HAP-1 (cell line): ENCODE measurements at regions of chr10 and their contacts with region 1.

Region 1: DNA sequence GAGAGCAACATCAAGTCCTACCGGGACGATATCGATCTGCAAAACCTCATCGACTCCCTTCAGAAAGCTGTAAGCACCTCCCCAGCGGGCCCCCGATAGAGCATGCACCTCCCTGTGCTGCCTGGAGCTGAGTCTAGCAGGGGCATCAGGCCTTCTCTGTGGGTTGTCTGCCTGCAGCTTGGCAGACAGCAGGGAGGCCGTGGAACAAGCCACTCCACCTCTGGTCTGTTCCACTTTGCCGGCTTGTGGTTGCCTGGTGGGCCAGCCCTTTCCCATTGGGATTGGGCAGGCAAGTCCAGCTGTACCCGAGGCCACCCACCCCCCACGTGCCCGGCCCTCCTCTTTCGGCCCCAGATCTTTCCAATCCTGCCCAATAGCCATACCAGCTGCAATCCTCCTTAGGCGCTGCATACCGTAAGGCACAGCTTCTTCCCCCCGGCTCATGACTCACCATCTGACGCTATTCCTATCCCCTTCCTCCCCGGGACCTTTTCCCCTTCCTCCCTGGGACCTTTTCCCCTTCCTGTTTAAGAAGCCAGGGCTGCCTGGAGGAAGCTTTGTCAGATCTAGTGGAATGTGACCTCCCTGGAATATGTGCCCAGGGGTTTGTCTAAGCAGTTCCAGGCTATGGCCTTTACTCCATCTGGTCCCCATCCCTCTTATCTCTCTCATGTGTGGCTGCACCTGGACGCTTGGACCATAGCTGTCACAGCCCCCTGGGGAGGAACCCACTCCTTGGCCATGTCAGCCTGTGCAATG is 28.1 kb upstream of the SH2D4B start:
- DNase-seq: no peak
- H3K4me3 ChIP-seq: no peak overlapping the region
- H3K4me1 ChIP-seq: peaks cover 7% of the 10 kb centered on the region
- H3K27me3 ChIP-seq: no peaks in the 10 kb centered on the region

Region 2: DNA sequence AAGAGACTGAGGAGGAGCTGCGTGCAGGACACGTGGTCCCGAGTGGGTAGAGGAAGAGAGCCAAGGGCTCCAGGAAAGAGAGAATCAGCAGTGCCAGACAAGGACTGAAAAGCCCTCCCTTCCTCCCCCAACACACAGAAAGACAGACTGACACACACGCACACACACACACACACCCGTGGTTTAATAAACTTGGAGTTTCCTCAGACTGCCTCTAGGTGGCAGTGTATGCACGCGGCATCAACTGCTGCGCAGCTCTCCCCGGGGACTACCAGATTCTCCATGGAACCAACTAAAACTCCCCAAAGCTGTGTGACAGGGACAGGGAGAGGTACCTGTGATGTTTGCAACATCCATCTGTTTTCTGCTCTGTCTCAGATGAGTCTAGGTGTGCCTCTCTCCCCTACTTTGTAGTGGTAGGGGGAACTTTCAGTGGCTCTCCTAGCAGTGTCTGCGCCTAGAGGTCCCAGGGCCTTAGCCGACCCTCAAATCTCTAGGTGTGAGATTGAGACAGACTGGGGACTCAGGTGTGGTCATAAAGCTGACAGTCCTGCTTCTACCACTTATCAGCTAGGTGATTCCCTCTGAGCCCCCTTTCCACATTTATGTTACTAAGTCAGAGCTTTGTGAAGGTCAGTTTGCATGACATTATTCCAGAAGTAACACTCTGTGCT is 64.8 kb before region 1 on chr10:
- in situ Hi-C with region 1: loop called (anchors 5 kb)
- DNase-seq: peak; percentile 65 to 77
- H3K4me3 ChIP-seq: no peak overlapping the region
- H3K4me1 ChIP-seq: no peaks in the 10 kb centered on the region
- H3K27me3 ChIP-seq: no peaks in the 10 kb centered on the region